HAP-1 (cell line): ENCODE measurements at regions of chr10 and their contacts with region 1.

Region 1: GRCh38 chr10:68759967-68760366 is 38.9 kb downstream of the CCAR1 start:
- DNase-seq: no peak
- H3K4me3 ChIP-seq: no peak overlapping the region
- H3K4me1 ChIP-seq: no peaks in the 10 kb centered on the region
- H3K27me3 ChIP-seq: no peaks in the 10 kb centered on the region

Region 2: DNA sequence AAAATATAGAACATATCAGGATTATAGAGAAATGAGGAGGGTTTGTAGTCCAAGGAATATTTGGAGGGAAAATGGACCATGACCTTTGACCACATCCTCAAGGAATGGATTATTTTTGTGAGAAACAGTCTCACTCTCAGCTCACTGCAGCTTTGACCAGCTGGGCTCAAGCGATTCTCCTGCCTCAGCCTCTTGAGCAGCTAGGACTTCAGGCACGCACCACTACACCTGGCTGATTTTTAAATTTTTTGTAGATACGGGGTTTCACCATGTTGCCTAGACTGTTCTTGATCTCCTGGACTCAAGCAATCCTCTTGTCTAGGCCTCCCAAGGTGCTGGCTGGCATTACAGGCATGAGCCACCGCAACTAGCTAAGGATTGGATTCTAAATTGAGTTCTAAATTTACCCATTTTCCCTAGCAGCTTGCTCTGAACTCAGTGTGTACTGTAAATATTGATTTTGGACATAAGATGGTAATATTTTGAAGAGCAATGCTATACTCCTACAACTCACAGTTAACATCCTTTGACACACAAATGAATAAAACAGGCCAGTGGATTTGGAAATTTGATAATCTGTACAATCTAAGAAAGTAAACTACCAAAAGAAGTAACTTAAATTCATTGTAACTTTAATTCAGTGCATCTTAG is 126.0 kb before region 1 on chr10:
- in situ Hi-C with region 1: no loop called
- DNase-seq: no peak
- H3K4me3 ChIP-seq: no peak overlapping the region
- H3K4me1 ChIP-seq: peaks cover 9% of the 10 kb centered on the region
- H3K27me3 ChIP-seq: no peaks in the 10 kb centered on the region

Region 3: DNA sequence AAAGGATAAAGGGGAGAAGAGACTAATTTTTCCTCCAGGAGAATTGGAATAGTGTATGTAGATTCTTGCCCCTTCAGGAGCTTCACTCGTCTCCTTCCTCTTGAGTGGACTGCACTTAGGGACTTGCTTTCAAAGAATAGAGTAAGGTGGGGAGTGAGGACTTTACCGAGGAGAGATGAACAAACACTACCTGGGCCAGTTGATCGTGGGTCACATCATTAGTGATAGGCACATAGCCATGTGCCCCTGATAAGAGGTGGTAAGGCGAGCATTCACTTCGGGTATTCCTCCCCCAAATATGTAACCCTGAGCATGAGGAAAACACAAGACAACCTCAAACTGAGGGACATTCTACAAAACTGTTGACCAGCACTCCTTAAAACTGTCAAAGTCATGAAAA is 214.0 kb after region 1 on chr10:
- in situ Hi-C with region 1: loop called (anchors 10 kb)
- DNase-seq: no peak
- H3K4me3 ChIP-seq: no peak overlapping the region
- H3K4me1 ChIP-seq: no peaks in the 10 kb centered on the region
- H3K27me3 ChIP-seq: no peaks in the 10 kb centered on the region

Region 4: DNA sequence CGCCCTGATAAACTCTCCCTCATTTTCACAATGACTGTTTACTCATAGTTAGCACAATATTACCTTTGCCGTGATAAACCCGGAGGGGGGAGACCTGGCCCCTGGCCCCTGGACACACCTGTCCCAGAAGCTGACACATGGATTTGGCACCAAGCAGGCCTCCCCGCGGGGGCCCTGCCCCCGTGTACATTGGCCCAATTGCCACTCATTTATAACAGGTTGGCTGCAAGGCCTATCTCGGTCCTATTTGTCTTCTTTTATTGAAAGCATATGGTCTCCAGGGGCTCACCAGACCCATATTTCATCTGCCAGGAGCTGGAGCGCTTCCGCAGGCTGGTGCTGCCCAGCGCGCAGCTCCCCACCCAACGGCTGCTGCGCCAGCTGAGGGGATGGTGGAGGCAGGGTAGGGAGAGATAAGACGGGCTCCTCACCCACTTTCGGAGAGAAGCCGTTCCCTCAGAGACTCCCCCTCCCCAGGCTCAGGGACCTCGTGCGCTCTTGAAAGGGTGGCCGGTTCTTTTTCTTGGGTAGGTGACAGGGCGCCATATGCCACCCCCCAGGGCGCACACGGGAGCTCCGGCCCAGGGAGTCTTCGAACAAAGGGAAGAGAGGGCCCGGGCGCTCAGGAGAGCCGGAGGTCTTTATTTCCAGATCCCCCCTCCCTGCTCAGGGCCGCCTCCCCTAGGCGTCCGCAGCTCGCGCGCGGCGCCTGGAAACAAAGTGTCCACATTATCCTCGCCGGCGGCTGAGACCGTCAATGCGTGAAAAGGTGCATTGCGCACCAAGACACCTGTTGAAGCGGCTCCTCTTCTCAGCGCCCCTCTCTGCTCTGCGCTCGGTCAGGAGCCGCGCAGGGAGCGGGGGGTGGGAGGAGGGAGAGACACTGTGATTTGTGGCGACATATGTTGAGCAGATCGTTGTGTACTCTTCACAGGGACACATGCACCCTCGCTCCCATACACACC is 817.6 kb after region 1 on chr10:
- in situ Hi-C with region 1: no loop called
- DNase-seq: no peak
- H3K4me3 ChIP-seq: no peak overlapping the region
- H3K4me1 ChIP-seq: no peaks in the 10 kb centered on the region
- H3K27me3 ChIP-seq: peaks cover 37% of the 10 kb centered on the region